ENCODE measurements at regions of chr5 and their contacts with region 1.

Region 1: DNA sequence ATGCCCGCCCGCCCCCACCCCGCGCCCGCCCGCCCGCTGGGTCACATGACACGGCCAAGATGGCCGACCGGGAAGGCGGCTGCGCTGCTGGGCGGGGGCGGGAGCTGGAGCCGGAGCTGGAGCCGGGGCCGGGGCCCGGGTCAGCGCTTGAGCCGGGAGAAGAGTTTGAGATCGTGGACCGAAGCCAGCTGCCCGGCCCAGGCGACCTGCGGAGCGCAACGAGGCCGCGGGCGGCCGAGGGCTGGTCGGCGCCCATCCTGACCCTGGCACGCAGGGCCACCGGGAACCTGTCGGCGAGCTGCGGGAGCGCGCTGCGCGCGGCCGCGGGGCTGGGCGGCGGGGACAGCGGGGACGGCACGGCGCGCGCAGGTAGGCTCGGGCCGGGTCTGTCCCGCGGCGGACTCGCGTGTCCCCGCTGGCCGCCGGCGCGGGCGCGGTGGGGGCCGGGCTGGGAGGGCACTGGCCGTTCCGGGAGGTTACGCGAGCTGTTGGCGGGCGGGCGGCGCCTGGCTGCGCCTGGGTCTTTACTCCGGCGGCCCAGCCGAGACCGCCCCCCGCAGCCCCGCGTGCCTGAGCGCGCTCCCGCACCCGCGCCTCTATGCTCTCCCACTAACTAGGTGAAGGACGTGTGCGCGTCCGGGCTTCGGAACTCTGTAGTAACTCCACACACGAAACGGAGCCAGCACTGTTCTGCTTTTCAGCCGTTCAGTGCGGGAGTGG is at the start of gene RUFY1:
- DNase-seq: peak; percentile 74 to 92 (median 87)
- ATAC-seq: peak; percentile 90
- H3K4me3 ChIP-seq: peak within 1 kb of the TSS; percentile 84
- H3K4me3 Mint-ChIP-seq: peak within 1 kb of the TSS; percentile 94 to 99 (median 96)
- H3K27ac ChIP-seq: peak within 1 kb of the TSS; percentile 87
- H3K27ac Mint-ChIP-seq: peak within 1 kb of the TSS; percentile 91 to 99 (median 98)
- H3K4me1 ChIP-seq: peaks cover 12 to 15% of the 10 kb centered on the region in 2 donors
- H3K4me1 Mint-ChIP-seq: peaks cover 10 to 49% (median 35%) of the 10 kb centered on the region in 7 donors
- H3K27me3 ChIP-seq: no peaks in the 10 kb centered on the region
- H3K27me3 Mint-ChIP-seq: peaks cover 0 to 4% (median 0%) of the 10 kb centered on the region in 5 donors
- total RNA-seq, gene RUFY1: 31.8 to 63.0 (median 52.3) TPM

Region 2: DNA sequence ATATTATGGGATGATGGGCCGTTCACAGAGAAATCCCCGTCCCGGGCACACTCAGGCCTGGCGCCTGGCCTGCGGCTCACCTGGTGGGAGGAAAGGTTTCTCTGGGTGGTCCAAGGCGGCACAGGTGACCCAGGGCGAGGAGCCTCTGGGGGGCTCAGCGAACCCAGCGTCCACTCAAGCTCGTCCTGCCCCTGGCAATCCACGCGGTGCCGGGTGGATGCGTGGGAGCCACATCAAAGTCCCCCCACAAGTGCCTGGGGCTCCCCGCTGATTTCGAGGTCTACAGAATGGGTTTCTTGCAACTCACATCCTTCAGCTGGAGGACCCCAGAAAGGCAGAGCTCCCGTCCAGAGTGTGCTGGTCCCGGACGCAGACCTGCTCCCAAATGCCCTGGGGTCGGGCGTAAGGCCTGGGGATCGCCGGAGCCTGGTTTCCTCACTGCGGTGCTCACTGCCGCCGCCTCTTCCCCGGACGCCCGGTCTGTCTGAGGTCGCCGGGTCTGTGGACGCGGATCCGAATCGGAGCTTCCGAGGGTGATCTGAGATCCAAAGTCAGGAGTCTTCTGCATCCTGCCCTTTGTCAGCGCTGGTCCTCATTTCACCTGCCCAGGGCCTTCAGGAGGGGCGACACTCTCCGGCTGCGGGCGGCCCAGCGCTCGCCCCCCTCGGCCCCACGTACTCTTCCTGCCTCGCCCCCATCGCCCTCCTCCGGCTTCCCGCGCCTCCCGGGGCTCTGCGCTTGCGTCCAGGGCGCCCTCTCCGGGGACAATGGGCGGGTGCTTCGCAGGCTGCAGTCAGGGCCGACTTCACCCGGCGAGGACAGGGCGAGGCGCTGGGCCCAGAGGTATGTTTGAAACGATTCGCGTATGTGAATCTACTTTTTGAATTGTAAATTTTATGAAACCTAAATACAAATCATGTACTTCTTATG is 20.3 kb before region 1 on chr5:
- CTCF ChIA-PET with region 1: no interaction called
- POLR2A ChIA-PET with region 1: interaction called, 14 read pairs
- intact Hi-C with region 1: loop called (anchors 1 to 2 kb)
- DNase-seq: peak; percentile 46 to 70 (median 59)
- ATAC-seq: peak; percentile 94
- H3K4me3 ChIP-seq: peak overlapping the region; percentile 48
- H3K4me3 Mint-ChIP-seq: peak overlapping the region; percentile 62 to 81 (median 75)
- H3K27ac ChIP-seq: peak overlapping the region; percentile 47
- H3K27ac Mint-ChIP-seq: peak overlapping the region in 3 of 9 donors; percentile 12 to 38 (median 25)
- H3K4me1 ChIP-seq: peaks cover 5 to 10% of the 10 kb centered on the region in 2 donors
- H3K4me1 Mint-ChIP-seq: peaks cover 6 to 20% (median 13%) of the 10 kb centered on the region in 7 donors
- H3K27me3 ChIP-seq: no peaks in the 10 kb centered on the region
- H3K27me3 Mint-ChIP-seq: peaks cover 0 to 9% (median 0%) of the 10 kb centered on the region in 5 donors

Region 3: GRCh38 chr5:180071531-180072255 is 521.0 kb after region 1 on chr5 and contains the start of gene RNF130:
- CTCF ChIA-PET with region 1: no interaction called
- POLR2A ChIA-PET with region 1: no interaction called
- intact Hi-C with region 1: loop called (anchors 2 kb)
- DNase-seq: peak; percentile 64 to 91 (median 77)
- ATAC-seq: peak; percentile 88
- H3K4me3 ChIP-seq: peak within 1 kb of the TSS; percentile 62
- H3K4me3 Mint-ChIP-seq: peak within 1 kb of the TSS; percentile 80 to 93 (median 91)
- H3K27ac ChIP-seq: peak within 1 kb of the TSS; percentile 76
- H3K27ac Mint-ChIP-seq: peak within 1 kb of the TSS in 8 of 9 donors; percentile 78 to 95 (median 90)
- H3K4me1 ChIP-seq: peaks cover 6 to 21% of the 10 kb centered on the region in 2 donors
- H3K4me1 Mint-ChIP-seq: peaks cover 10 to 47% (median 38%) of the 10 kb centered on the region in 7 donors
- H3K27me3 ChIP-seq: no peaks in the 10 kb centered on the region
- H3K27me3 Mint-ChIP-seq: peaks cover 0 to 50% (median 0%) of the 10 kb centered on the region in 5 donors
- total RNA-seq, gene RNF130: 3.6 to 76.3 (median 23.3) TPM

Region 4: DNA sequence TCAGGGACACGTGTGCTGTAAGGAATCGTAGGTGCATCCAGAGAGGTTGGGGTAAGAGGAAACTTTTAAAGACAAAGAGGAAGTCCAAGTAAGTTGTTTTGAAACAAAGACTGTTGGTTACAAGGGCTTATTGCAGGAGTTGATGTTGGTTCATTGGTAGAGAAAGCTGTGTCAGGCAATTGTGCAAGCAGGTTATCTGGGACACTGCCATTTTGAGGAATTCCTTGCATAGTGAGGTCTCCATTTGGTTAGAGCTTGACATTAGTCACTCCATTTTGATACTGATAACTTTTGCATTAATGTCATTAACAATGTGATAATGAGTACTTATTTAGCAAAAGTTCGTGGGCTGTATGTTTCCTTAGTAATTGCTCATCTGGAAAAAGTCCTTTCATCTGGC is 968.4 kb after region 1 on chr5:
- CTCF ChIA-PET with region 1: no interaction called
- POLR2A ChIA-PET with region 1: no interaction called
- intact Hi-C with region 1: no loop called
- DNase-seq: no peak
- ATAC-seq: peak; percentile 26
- H3K4me3 ChIP-seq: no peak overlapping the region
- H3K4me3 Mint-ChIP-seq: peak overlapping the region in 1 of 10 donors; percentile 12
- H3K27ac ChIP-seq: no peak overlapping the region
- H3K27ac Mint-ChIP-seq: peak overlapping the region in 2 of 9 donors; percentile 15 to 47
- H3K4me1 ChIP-seq: peaks cover 3 to 5% of the 10 kb centered on the region in 2 donors
- H3K4me1 Mint-ChIP-seq: peaks cover 35 to 93% (median 84%) of the 10 kb centered on the region in 7 donors
- H3K27me3 ChIP-seq: no peaks in the 10 kb centered on the region
- H3K27me3 Mint-ChIP-seq: no peaks in the 10 kb centered on the region